B cell (primary cell): ENCODE measurements at regions of chr9 and their contacts with region 1.

Region 1: GRCh38 chr9:90078988-90079421 is 474.2 kb downstream of the GADD45G start:
- DNase-seq: peak; percentile 55
- ATAC-seq: peak; percentile 72
- H3K4me3 ChIP-seq: no peak overlapping the region
- H3K4me3 Mint-ChIP-seq: peak overlapping the region; percentile 69
- H3K27ac ChIP-seq: no peak overlapping the region
- H3K27ac Mint-ChIP-seq: peak overlapping the region; percentile 13
- H3K4me1 ChIP-seq: peaks cover 12 to 21% of the 10 kb centered on the region in 2 donors
- H3K4me1 Mint-ChIP-seq: peaks cover 24% of the 10 kb centered on the region
- H3K27me3 ChIP-seq: no peaks in the 10 kb centered on the region
- H3K27me3 Mint-ChIP-seq: peaks cover 27% of the 10 kb centered on the region
- CTCF ChIP-seq: no peak

Region 2: GRCh38 chr9:90020276-90020871 is 58.6 kb before region 1 on chr9:
- CTCF ChIA-PET with region 1: interaction called, 3 read pairs
- POLR2A ChIA-PET with region 1: no interaction called
- intact Hi-C with region 1: loop called (anchors 5 kb)
- DNase-seq: no peak
- ATAC-seq: no peak
- H3K4me3 ChIP-seq: no peak overlapping the region
- H3K4me3 Mint-ChIP-seq: no peak overlapping the region
- H3K27ac ChIP-seq: no peak overlapping the region
- H3K27ac Mint-ChIP-seq: no peak overlapping the region
- H3K4me1 ChIP-seq: peaks cover 54 to 58% of the 10 kb centered on the region in 2 donors
- H3K4me1 Mint-ChIP-seq: peaks cover 60% of the 10 kb centered on the region
- H3K27me3 ChIP-seq: no peaks in the 10 kb centered on the region
- H3K27me3 Mint-ChIP-seq: no peaks in the 10 kb centered on the region
- CTCF ChIP-seq: no peak

Region 3: DNA sequence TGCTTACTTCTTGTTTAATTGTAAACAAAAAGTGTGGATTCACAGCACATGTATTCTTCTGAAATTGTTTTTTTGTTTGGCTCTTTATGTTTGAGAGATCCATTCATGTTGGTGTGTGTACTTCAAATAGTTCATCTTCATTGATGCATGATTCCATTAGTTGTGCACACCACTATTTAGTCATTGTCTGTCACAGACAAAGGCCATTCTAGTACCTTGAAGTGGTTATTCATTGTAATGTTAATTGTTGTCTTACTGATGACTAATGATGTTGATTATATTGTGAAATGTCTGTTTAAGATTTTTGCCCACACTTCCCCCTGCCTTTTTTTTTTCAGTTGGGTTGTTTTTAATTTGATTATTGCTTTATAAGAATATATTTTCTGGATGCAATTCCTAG is 172.3 kb after region 1 on chr9:
- CTCF ChIA-PET with region 1: no interaction called
- POLR2A ChIA-PET with region 1: no interaction called
- intact Hi-C with region 1: no loop called
- DNase-seq: no peak
- ATAC-seq: no peak
- H3K4me3 ChIP-seq: no peak overlapping the region
- H3K4me3 Mint-ChIP-seq: no peak overlapping the region
- H3K27ac ChIP-seq: no peak overlapping the region
- H3K27ac Mint-ChIP-seq: no peak overlapping the region
- H3K4me1 ChIP-seq: no peaks in the 10 kb centered on the region
- H3K4me1 Mint-ChIP-seq: no peaks in the 10 kb centered on the region
- H3K27me3 ChIP-seq: peaks cover 0 to 2% (median 0%) of the 10 kb centered on the region in 4 experiments
- H3K27me3 Mint-ChIP-seq: peaks cover 3% of the 10 kb centered on the region
- CTCF ChIP-seq: no peak